ENCODE measurements at regions of chr1 and their contacts with region 1.

Region 1: GRCh38 chr1:157580179-157580827 is 17.6 kb downstream of the FCRL4 start:
- DNase-seq: peak; percentile 69
- H3K4me3 Mint-ChIP-seq: no peak overlapping the region
- H3K27ac Mint-ChIP-seq: no peak overlapping the region
- H3K4me1 Mint-ChIP-seq: peaks cover 18% of the 10 kb centered on the region
- H3K27me3 Mint-ChIP-seq: no peaks in the 10 kb centered on the region
- CTCF ChIP-seq: peak; percentile 58

Region 2: DNA sequence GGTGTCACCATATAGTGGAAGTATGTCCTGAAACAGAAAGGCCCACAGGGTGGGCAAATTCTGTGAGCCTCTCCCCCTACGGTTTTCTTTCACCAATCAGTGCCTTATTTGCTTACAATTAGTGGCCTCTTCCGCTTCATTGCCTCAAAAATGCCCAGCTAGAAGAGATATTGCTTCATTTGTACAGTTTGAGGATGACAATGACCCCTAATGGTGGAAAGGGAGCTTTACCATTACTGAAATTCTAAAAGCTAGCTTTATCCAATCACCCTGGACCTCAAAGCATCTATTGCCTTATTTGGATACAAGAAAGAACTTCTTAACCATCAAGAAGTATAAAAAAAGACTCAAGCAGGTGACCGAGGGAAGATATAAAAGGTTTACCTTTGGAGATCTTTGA is 610.3 kb before region 1 on chr1:
- CTCF ChIA-PET with region 1: no interaction called
- intact Hi-C with region 1: no loop called
- DNase-seq: no peak
- H3K4me3 Mint-ChIP-seq: no peak overlapping the region
- H3K27ac Mint-ChIP-seq: no peak overlapping the region
- H3K4me1 Mint-ChIP-seq: no peaks in the 10 kb centered on the region
- H3K27me3 Mint-ChIP-seq: no peaks in the 10 kb centered on the region
- CTCF ChIP-seq: no peak

Region 3: GRCh38 chr1:157595356-157595755 is 15.1 kb after region 1 on chr1:
- CTCF ChIA-PET with region 1: interaction called, 11 read pairs
- intact Hi-C with region 1: no loop called
- DNase-seq: no peak
- H3K4me3 Mint-ChIP-seq: no peak overlapping the region
- H3K27ac Mint-ChIP-seq: no peak overlapping the region
- H3K4me1 Mint-ChIP-seq: peaks cover 33% of the 10 kb centered on the region
- H3K27me3 Mint-ChIP-seq: no peaks in the 10 kb centered on the region
- CTCF ChIP-seq: no peak

Region 4: DNA sequence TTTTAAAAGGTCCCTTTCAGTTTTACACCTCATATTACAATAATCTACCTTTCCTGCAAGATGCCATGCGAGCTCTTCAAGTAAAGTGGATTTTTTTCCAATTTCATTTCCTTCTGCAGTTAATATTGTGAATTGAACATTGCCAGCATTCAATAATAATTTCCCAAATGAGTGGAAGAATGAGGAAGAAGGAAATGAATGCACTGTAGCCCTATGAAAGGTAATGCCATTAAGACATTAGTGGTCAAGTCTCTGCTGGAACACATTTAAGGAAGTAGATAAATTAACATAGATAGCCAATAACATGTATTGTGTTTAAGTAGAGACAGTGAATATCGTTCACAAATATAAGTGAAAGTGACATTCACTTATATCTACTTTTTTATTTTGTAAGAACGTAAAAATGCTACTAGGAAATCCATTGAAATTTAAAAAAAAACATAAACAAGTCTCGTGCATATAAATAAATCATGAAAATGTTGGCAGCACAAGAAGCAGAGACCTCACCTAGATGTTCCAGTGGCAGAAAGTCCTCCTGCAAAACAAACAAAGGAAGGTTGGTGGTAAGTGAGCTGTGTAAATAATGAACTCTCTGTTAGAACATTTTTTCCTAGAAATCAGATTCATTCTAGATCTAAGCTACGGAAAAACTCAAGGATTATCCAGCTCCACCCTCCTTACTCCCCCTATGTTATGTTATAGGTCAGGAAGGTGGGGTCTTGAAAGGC is 102.6 kb after region 1 on chr1:
- CTCF ChIA-PET with region 1: interaction called, 28 read pairs
- intact Hi-C with region 1: no loop called
- DNase-seq: no peak
- H3K4me3 Mint-ChIP-seq: peak overlapping the region; percentile 97
- H3K27ac Mint-ChIP-seq: peak overlapping the region; percentile 99
- H3K4me1 Mint-ChIP-seq: peaks cover 84% of the 10 kb centered on the region
- H3K27me3 Mint-ChIP-seq: no peaks in the 10 kb centered on the region
- CTCF ChIP-seq: no peak

Region 5: GRCh38 chr1:157691285-157691920 is 111.1 kb after region 1 on chr1:
- CTCF ChIA-PET with region 1: interaction called, 146 read pairs
- intact Hi-C with region 1: loop called (anchors 1 kb)
- DNase-seq: peak; percentile 45
- H3K4me3 Mint-ChIP-seq: no peak overlapping the region
- H3K27ac Mint-ChIP-seq: peak overlapping the region; percentile 8
- H3K4me1 Mint-ChIP-seq: peaks cover 53% of the 10 kb centered on the region
- H3K27me3 Mint-ChIP-seq: no peaks in the 10 kb centered on the region
- CTCF ChIP-seq: peak; percentile 54

Region 6: DNA sequence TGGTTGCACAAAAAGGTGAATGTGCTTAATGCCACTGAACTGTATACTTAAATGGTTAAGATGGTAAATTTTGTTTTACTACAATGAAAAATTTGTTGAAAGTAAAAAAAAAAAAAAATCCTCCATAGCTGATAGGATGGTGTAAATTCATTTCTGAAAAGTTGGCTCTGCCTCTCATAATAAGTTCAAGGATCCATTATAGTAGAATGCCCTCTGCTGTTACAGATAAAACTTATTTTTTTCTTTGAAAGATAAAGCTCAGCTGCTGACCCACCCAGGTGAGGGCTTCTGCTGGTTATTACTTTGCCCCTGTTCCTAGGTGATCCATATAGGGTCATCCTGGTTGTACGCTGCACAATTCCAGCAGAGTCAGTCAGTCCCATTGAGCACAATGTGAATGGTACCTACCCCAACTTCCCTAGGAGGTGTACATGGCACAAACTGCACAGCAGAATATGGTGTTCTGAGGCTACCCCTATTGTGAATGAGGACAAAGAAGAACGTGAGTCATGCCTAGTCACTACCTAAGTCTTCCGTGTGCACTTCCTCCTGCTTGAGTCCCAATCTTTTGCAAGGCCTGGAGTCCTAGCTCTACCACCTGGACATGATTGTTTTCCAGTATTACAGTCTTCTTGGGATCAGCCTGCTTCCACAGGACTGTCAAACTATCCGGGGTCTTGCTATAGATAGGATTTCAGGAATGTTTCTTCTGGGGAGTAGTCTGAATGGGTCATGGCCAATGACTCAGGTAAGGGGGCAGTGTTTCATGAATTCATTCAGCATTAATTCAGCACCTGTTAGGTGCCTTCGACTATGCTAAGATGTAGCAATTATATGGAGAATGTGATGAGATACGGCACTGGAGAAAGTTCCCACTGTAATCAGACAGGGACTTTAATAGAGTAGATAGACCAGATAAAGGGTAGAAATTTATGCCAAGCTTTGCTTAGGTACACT is 282.1 kb after region 1 on chr1:
- CTCF ChIA-PET with region 1: interaction called, 12 read pairs
- intact Hi-C with region 1: loop called (anchors 5 kb)
- DNase-seq: no peak
- H3K4me3 Mint-ChIP-seq: no peak overlapping the region
- H3K27ac Mint-ChIP-seq: peak overlapping the region; percentile 50
- H3K4me1 Mint-ChIP-seq: peaks cover 10% of the 10 kb centered on the region
- H3K27me3 Mint-ChIP-seq: no peaks in the 10 kb centered on the region
- CTCF ChIP-seq: no peak

Region 7: GRCh38 chr1:157948312-157949073 is 368.2 kb after region 1 on chr1:
- CTCF ChIA-PET with region 1: interaction called, 5 read pairs
- intact Hi-C with region 1: loop called (anchors 2 kb)
- DNase-seq: peak; percentile 61
- H3K4me3 Mint-ChIP-seq: no peak overlapping the region
- H3K27ac Mint-ChIP-seq: no peak overlapping the region
- H3K4me1 Mint-ChIP-seq: peaks cover 26% of the 10 kb centered on the region
- H3K27me3 Mint-ChIP-seq: peaks cover 28% of the 10 kb centered on the region
- CTCF ChIP-seq: peak; percentile 72